ENCODE measurements at regions of chr17 and their contacts with region 1.

Region 1: GRCh38 chr17:29019475-29020181 is 13.8 kb upstream of the SEZ6 start:
- DNase-seq: peak in 1 of 2 experiments; percentile 72
- H3K4me3 ChIP-seq: peak overlapping the region in 2 of 4 experiments; percentile 23 to 45; a peak in 4 of 8 replicates
- H3K27ac ChIP-seq: no peak overlapping the region
- H3K4me1 ChIP-seq: peaks cover 20 to 37% (median 32%) of the 10 kb centered on the region in 4 experiments
- H3K27me3 ChIP-seq: peaks cover 0 to 3% (median 0%) of the 10 kb centered on the region in 4 experiments; a peak in 3 of 7 replicates
- CTCF ChIP-seq: no peak
- EP300 ChIP-seq: no peak
- POLR2A ChIP-seq: no peak
- RAD21 ChIP-seq: no peak

Region 2: GRCh38 chr17:28992625-28993600 is 26.7 kb before region 1 on chr17:
- CTCF ChIA-PET with region 1: interaction called, 16 read pairs
- POLR2A ChIA-PET with region 1: interaction called, 3 read pairs
- DNase-seq: no peak
- H3K4me3 ChIP-seq: no peak overlapping the region
- H3K27ac ChIP-seq: no peak overlapping the region
- H3K4me1 ChIP-seq: peaks cover 0 to 16% (median 7%) of the 10 kb centered on the region in 4 experiments; a peak in 5 of 7 replicates
- H3K27me3 ChIP-seq: no peaks in the 10 kb centered on the region; a peak in 3 of 7 replicates
- CTCF ChIP-seq: no peak
- EP300 ChIP-seq: no peak
- POLR2A ChIP-seq: no peak
- RAD21 ChIP-seq: peak in 1 of 2 experiments; percentile 30; a peak in 1 of 4 replicates

Region 3: GRCh38 chr17:29042679-29043538 is 23.3 kb after region 1 on chr17 and contains the start of gene PIPOX:
- CTCF ChIA-PET with region 1: interaction called, 13 read pairs
- POLR2A ChIA-PET with region 1: interaction called, 16 read pairs
- DNase-seq: peak; percentile 81 to 94
- H3K4me3 ChIP-seq: peak within 1 kb of the TSS in 3 of 4 experiments; percentile 0 to 25 (median 15); a peak in 3 of 8 replicates
- H3K27ac ChIP-seq: peak within 1 kb of the TSS; percentile 92
- H3K4me1 ChIP-seq: peaks cover 14 to 27% (median 20%) of the 10 kb centered on the region in 4 experiments
- H3K27me3 ChIP-seq: no peaks in the 10 kb centered on the region
- CTCF ChIP-seq: peak; percentile 26 to 54 (median 45)
- EP300 ChIP-seq: peak in 1 of 2 experiments; percentile 85; a peak in 1 of 3 replicates
- POLR2A ChIP-seq: peak; percentile 60 to 89
- RAD21 ChIP-seq: peak in 1 of 2 experiments; percentile 63; a peak in 2 of 4 replicates
- total RNA-seq, gene PIPOX: 55.5 and 57.2 TPM in 2 replicates